ENCODE measurements at regions of chr1 and their contacts with region 1.

Region 1: GRCh38 chr1:38064232-38064903 is 17.8 kb upstream of the POU3F1 start:
- DNase-seq: no peak
- ATAC-seq: no peak
- H3K4me3 ChIP-seq: no peak overlapping the region
- H3K27ac ChIP-seq: no peak overlapping the region
- H3K4me1 ChIP-seq: peaks cover 15% of the 10 kb centered on the region
- H3K27me3 ChIP-seq: no peaks in the 10 kb centered on the region
- CTCF ChIP-seq: no peak
- EP300 ChIP-seq: no peak
- POLR2A ChIP-seq: no peak
- RAD21 ChIP-seq: no peak

Region 2: DNA sequence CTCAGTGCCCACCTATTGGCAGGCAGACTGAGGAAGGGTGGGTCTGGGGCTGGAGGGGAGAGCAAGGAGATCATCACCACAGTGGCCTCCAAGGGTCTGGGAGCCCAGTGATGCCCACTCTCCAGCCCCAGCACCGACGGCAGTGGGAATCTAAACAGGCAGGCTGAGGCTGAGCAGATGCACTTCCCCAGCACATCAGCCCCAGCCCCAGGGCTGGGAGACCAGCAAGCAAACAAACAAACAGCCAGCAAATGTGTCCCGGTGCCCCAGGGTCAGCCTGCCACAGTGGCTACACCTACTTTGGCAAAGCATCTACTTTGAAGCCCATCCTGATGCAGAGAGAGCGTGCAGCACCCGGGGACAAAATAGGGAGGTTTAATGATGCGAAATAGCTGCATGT is 806.3 kb before region 1 on chr1:
- CTCF ChIA-PET with region 1: no interaction called
- POLR2A ChIA-PET with region 1: no interaction called
- RAD21 ChIA-PET with region 1: no interaction called
- SMC1A ChIA-PET with region 1: no interaction called
- in situ Hi-C with region 1: no loop called
- intact Hi-C with region 1: no loop called
- DNase-seq: no peak
- ATAC-seq: no peak
- H3K4me3 ChIP-seq: no peak overlapping the region
- H3K27ac ChIP-seq: no peak overlapping the region
- H3K4me1 ChIP-seq: no peaks in the 10 kb centered on the region
- H3K27me3 ChIP-seq: peaks cover 4% of the 10 kb centered on the region in 2 experiments; a peak in 2 of 4 replicates
- CTCF ChIP-seq: no peak
- EP300 ChIP-seq: no peak
- POLR2A ChIP-seq: no peak
- RAD21 ChIP-seq: no peak

Region 3: DNA sequence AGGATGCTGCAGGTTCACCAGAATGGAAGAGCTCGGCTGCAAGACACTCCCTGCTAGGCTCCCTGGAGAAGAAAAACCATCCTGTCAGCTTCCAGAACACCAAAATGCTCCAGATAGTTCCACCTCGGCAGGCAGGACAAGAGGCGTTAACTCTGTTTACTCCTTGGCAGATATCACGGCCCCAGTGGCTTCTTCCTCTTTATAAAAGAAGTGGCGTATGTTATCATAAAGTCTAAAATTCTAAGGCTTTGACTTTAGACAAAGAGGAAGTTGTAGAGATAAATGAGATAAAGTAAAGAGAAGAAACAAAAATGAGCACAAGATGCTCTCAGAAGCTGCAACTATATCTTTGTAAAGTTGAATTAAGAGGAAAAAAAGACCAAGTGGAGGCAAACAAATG is 180.7 kb before region 1 on chr1:
- CTCF ChIA-PET with region 1: no interaction called
- POLR2A ChIA-PET with region 1: no interaction called
- RAD21 ChIA-PET with region 1: no interaction called
- SMC1A ChIA-PET with region 1: no interaction called
- in situ Hi-C with region 1: no loop called
- intact Hi-C with region 1: no loop called
- DNase-seq: no peak
- ATAC-seq: no peak
- H3K4me3 ChIP-seq: no peak overlapping the region
- H3K27ac ChIP-seq: no peak overlapping the region
- H3K4me1 ChIP-seq: no peaks in the 10 kb centered on the region
- H3K27me3 ChIP-seq: no peaks in the 10 kb centered on the region
- CTCF ChIP-seq: no peak
- EP300 ChIP-seq: no peak
- POLR2A ChIP-seq: no peak
- RAD21 ChIP-seq: no peak

Region 4: GRCh38 chr1:38037221-38037939 is 27.0 kb before region 1 on chr1:
- CTCF ChIA-PET with region 1: interaction called, 8 read pairs
- POLR2A ChIA-PET with region 1: no interaction called
- RAD21 ChIA-PET with region 1: interaction called, 123 read pairs
- SMC1A ChIA-PET with region 1: interaction called, 316 read pairs
- in situ Hi-C with region 1: no loop called
- intact Hi-C with region 1: no loop called
- DNase-seq: no peak
- ATAC-seq: peak; percentile 36; the same call in 2 of the 3 replicates
- H3K4me3 ChIP-seq: no peak overlapping the region
- H3K27ac ChIP-seq: no peak overlapping the region
- H3K4me1 ChIP-seq: no peaks in the 10 kb centered on the region
- H3K27me3 ChIP-seq: no peaks in the 10 kb centered on the region; a peak in 1 of 4 replicates
- CTCF ChIP-seq: peak in 2 of 3 experiments; percentile 11 to 47; a peak in 2 of 6 replicates
- EP300 ChIP-seq: no peak
- POLR2A ChIP-seq: no peak
- RAD21 ChIP-seq: peak; percentile 57

Region 5: DNA sequence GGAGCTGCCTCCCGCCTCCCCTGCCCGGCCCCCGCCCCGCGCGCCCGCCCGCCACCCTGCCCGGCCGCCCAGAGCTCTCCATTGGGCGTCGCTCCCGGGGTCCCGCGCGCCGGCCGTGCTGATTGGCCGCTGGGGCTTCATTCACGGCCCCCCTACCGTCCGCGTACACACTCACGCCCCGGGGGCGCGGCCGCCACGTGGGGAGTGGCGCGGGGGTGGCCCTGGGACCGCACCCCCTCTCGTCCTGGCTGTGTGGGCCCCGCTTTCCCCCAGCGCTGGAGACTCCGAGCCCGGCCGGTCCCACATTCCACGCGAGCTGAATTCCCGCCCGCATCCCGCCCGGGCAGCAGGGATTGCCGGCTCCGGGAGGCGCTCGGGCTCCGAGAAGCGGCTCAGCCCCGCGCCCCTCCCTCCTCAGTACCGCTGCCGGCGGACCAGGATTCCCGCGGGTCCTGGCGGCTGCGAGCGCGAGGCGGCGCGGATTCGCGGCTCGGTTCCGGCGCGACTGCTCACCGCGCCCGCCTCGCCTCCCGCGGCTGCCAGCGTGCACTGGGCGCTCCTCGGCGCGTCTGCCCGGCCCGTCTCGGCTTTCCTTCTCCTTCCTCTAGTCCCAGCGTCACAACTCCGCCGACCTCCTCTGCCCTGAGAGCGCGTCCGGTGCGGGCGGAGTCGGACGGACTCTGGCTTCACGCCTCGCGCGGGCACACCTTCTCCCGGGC is 17.3 kb before region 1 on chr1:
- CTCF ChIA-PET with region 1: interaction called, 92 read pairs
- POLR2A ChIA-PET with region 1: interaction called, 6 read pairs
- RAD21 ChIA-PET with region 1: interaction called, 123 read pairs
- SMC1A ChIA-PET with region 1: interaction called, 316 read pairs
- in situ Hi-C with region 1: no loop called
- intact Hi-C with region 1: no loop called
- DNase-seq: no peak
- ATAC-seq: peak; percentile 87
- H3K4me3 ChIP-seq: peak overlapping the region; percentile 57; the same call in 1 of the 2 replicates
- H3K27ac ChIP-seq: no peak overlapping the region
- H3K4me1 ChIP-seq: peaks cover 15% of the 10 kb centered on the region
- H3K27me3 ChIP-seq: peaks cover 9 to 13% of the 10 kb centered on the region in 2 experiments
- CTCF ChIP-seq: no peak
- EP300 ChIP-seq: no peak
- POLR2A ChIP-seq: no peak
- RAD21 ChIP-seq: no peak

Region 6: GRCh38 chr1:38052750-38053410 is 11.5 kb before region 1 on chr1:
- CTCF ChIA-PET with region 1: interaction called, 92 read pairs
- POLR2A ChIA-PET with region 1: interaction called, 7 read pairs
- RAD21 ChIA-PET with region 1: interaction called, 73 read pairs
- SMC1A ChIA-PET with region 1: interaction called, 316 read pairs
- in situ Hi-C with region 1: no loop called
- intact Hi-C with region 1: no loop called
- DNase-seq: peak; percentile 58
- ATAC-seq: peak; percentile 85
- H3K4me3 ChIP-seq: no peak overlapping the region
- H3K27ac ChIP-seq: no peak overlapping the region
- H3K4me1 ChIP-seq: peaks cover 29% of the 10 kb centered on the region
- H3K27me3 ChIP-seq: no peaks in the 10 kb centered on the region
- CTCF ChIP-seq: no peak
- EP300 ChIP-seq: peak; percentile 54 to 71; a peak in 2 of 4 replicates
- POLR2A ChIP-seq: no peak
- RAD21 ChIP-seq: no peak